Ovary (tissue), 10 donors: ENCODE measurements at regions of chr4 and their contacts with region 1.

Region 1: DNA sequence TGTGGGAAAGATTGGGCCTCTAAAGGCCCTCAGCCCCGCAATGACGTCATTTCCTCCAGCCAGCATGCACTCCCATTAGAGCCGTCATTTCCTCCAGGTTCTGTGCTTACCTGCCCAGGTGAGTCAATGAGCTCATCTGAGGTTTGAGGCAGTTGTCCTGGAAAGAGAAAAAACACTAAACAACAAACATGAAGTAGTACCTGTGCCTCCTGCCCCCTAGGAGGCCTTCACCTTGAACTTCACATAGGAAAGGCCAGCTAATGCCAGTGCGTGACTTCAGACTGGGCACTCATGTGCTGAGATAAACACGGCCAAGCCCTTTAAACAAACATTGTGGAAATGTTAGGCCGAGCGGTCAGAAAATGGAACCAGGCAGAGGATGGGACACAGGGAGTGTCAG is 55.9 kb downstream of the FHDC1 start:
- DNase-seq: no peak
- H3K4me3 ChIP-seq: no peak overlapping the region
- H3K27ac ChIP-seq: no peak overlapping the region
- H3K4me1 ChIP-seq: no peaks in the 10 kb centered on the region
- H3K27me3 ChIP-seq: no peaks in the 10 kb centered on the region
- CTCF ChIP-seq: no peak
- EP300 ChIP-seq: no peak
- POLR2A ChIP-seq: no peak

Region 2: DNA sequence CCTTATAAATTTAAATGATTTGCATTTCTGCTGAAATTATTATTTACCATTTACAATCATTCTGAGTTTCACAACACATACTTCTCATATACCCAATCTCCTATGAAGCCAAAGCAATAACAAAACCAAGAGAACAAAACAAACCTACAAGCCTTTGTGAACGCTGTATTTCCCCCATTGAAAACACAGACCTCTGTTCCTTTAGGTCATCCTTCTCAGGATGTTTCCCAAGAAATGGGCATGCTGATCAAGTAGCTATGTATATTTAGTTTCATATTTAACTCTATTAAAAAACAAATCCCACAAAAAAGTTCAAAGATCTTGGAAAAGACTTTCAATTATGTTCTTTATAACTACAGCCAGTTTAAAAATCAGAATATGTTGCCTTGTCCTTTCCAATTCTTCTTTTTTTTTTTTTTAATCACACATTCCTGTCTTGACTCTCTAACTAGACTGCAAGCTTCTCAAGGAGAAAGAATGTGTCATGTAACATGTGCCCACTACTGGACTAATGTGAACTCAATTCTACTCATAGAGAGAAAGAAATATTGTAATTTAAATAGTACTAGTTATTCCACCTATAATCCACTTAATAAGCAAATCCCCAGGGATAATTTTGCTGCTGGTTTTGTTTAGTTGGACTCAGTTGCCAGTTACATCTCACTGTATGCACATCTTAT is 1799.4 kb before region 1 on chr4:
- intact Hi-C with region 1: no loop called
- DNase-seq: no peak
- H3K4me3 ChIP-seq: no peak overlapping the region
- H3K27ac ChIP-seq: no peak overlapping the region
- H3K4me1 ChIP-seq: peaks cover 1% of the 10 kb centered on the region
- H3K27me3 ChIP-seq: no peaks in the 10 kb centered on the region
- CTCF ChIP-seq: no peak
- EP300 ChIP-seq: no peak
- POLR2A ChIP-seq: no peak

Region 3: DNA sequence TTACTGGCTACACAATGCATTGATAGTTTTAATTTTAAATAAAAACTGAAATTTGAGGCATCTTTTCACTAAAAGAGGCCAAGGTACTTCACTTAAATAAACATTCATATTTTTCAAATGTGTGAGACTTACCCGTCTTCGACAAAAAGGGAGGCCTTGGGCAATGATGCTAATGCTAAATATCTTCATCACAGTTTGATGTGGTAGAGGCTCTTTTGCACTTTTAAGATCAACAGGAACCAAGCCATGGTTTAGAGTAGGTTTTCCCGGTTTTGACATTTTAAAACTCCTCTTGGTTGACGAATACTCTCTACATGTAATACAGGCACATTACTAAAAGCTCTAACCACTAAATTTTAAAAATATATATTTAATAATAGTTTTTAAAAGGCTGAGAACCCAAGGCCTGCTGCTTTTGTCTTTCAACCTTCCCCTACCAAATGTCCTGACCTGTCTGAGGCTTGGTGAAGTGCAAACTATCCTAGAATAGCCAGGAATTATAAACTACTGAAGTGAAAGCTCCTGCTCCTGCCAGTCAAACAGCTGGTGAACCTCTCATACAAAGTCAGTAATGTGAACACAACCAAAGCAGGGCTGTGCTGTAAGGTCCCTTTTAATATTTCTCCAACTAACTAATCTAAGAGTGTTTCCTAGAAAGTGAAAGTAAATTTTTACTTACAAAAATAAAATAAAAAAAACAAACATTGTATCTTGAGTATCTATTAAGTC is 609.8 kb before region 1 on chr4:
- intact Hi-C with region 1: no loop called
- DNase-seq: peak in 1 of 5 donors; percentile 20
- H3K4me3 ChIP-seq: peak overlapping the region; percentile 17
- H3K27ac ChIP-seq: peak overlapping the region in 1 of 2 donors; percentile 65
- H3K4me1 ChIP-seq: no peaks in the 10 kb centered on the region
- H3K27me3 ChIP-seq: no peaks in the 10 kb centered on the region
- CTCF ChIP-seq: no peak
- EP300 ChIP-seq: no peak
- POLR2A ChIP-seq: no peak

Region 4: DNA sequence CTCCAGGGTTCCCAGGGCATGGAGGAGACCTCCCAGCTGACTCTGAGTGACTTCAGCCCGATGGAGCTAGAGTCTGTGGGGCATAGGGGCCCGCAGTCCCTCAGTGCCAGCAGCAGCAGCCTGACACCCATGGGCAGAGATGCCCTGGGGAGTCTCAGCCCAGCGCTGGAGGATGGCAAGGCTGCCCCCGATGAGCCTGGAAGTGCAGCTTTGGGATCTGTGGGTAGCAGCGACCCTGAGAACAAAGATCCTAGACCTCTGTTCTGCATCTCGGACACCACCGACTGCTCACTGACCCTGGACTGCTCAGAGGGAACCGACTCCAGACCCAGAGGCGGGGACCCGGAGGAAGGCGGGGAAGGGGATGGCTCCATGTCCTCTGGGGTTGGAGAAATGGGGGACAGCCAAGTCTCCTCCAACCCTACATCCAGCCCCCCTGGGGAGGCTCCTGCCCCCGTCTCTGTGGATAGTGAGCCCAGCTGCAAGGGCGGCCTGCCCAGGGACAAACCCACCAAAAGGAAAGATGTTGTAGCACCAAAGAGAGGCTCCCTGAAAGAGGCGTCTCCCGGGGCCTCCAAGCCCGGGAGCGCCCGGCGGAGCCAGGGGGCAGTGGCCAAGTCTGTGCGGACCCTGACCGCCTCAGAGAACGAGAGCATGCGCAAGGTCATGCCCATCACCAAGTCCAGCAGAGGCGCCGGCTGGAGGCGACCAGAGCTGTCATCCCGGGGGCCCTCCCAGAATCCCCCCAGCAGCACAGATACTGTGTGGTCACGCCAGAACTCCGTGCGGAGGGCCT is 16.5 kb before region 1 on chr4:
- intact Hi-C with region 1: loop called in 1 of 4 experiments (anchors 2 kb)
- DNase-seq: no peak
- H3K4me3 ChIP-seq: no peak overlapping the region
- H3K27ac ChIP-seq: no peak overlapping the region
- H3K4me1 ChIP-seq: no peaks in the 10 kb centered on the region
- H3K27me3 ChIP-seq: no peaks in the 10 kb centered on the region
- CTCF ChIP-seq: no peak
- EP300 ChIP-seq: no peak
- POLR2A ChIP-seq: no peak